Mammary epithelial cell (primary cell): ENCODE measurements at regions of chr4 and their contacts with region 1.

Region 1: GRCh38 chr4:172830295-172830764 is 338.3 kb upstream of the GALNT7 start:
- DNase-seq: no peak
- H3K4me3 ChIP-seq: no peak overlapping the region
- H3K27ac ChIP-seq: no peak overlapping the region
- H3K4me1 ChIP-seq: no peaks in the 10 kb centered on the region
- H3K27me3 ChIP-seq: peaks cover 2% of the 10 kb centered on the region
- CTCF ChIP-seq: peak; percentile 35 to 46

Region 2: DNA sequence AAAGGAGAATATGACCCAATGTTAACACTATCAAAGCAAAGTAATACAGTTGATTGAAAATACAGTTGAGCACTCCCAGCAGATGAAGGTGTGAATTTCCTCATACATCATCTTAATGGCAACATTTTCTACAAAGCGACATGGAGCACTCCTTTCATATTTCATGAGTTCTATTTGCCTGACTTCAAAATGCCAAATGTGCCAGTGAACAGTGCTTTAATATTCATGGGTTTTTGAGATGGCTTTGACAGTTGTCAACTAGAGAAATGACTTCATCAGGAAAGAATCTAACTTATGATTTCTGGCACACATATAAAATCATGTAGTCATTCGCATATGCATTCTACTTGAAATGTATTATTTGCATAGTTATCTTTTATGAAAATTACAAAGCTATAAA is 794.8 kb before region 1 on chr4:
- CTCF ChIA-PET with region 1: no interaction called
- dilution Hi-C with region 1: no loop called
- in situ Hi-C with region 1: no loop called
- intact Hi-C with region 1: no loop called
- DNase-seq: no peak
- H3K4me3 ChIP-seq: no peak overlapping the region
- H3K27ac ChIP-seq: no peak overlapping the region
- H3K4me1 ChIP-seq: no peaks in the 10 kb centered on the region
- H3K27me3 ChIP-seq: no peaks in the 10 kb centered on the region
- CTCF ChIP-seq: no peak

Region 3: GRCh38 chr4:172232966-172233365 is 597.4 kb before region 1 on chr4:
- CTCF ChIA-PET with region 1: no interaction called
- dilution Hi-C with region 1: no loop called
- in situ Hi-C with region 1: loop called (anchors 25 kb)
- intact Hi-C with region 1: no loop called
- DNase-seq: no peak
- H3K4me3 ChIP-seq: no peak overlapping the region
- H3K27ac ChIP-seq: no peak overlapping the region
- H3K4me1 ChIP-seq: no peaks in the 10 kb centered on the region
- H3K27me3 ChIP-seq: no peaks in the 10 kb centered on the region
- CTCF ChIP-seq: peak in 1 of 2 donors; percentile 25

Region 4: GRCh38 chr4:172243551-172243950 is 586.8 kb before region 1 on chr4:
- CTCF ChIA-PET with region 1: no interaction called
- dilution Hi-C with region 1: no loop called
- in situ Hi-C with region 1: loop called (anchors 25 kb)
- intact Hi-C with region 1: loop called (anchors 5 kb)
- DNase-seq: no peak
- H3K4me3 ChIP-seq: no peak overlapping the region
- H3K27ac ChIP-seq: no peak overlapping the region
- H3K4me1 ChIP-seq: no peaks in the 10 kb centered on the region
- H3K27me3 ChIP-seq: no peaks in the 10 kb centered on the region
- CTCF ChIP-seq: no peak